ENCODE measurements at regions of chr5 and their contacts with region 1.

Region 1: DNA sequence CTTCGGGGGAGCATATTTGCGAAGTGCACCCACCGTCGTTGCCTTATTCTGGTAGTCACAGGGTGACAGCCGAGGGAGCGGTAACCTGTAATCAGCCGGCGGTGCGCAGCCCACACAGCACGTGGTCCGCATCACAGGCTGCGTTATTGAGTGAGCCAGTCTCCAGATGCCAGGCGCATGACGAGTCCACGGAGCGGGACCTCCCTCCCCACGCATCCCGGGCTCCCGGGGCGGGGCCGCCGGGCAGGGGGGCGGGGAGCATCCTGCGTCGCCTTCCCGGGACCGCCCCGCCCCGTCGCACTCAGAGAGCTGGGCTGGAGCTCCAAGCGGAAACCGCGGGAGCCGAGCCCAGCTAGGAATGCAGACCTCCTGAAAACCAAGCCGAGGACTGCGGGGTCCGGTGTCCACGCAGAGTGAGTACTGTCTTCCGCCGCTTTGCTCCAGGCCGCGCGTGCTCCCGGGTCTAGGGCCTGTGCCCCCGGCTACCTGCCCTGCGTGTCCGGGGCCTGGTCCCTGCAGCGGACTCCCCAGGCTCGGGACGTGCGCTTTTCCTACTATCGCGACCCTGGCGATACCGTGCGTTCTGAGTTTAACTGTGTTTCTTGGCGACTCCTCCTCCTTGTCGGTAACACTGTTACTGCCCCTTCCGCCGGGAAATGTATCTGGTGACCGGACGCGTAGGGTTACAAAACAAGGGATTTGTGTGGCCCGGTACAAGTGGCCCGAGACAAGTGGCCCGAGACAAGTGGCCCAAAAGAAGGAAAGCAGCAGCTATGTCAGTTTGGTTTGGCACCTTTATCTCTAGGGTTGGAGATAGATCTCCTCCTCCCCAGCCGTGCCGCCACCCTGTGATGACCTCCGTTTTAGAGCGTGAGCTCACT is 40.6 kb downstream of the CAST start:
- DNase-seq: peak; percentile 83 to 97 (median 94)
- H3K4me3 ChIP-seq: peak overlapping the region; percentile 63 to 96 (median 84)
- H3K27ac ChIP-seq: peak overlapping the region; percentile 35 to 97 (median 86)
- H3K27me3 ChIP-seq: no peaks in the 10 kb centered on the region
- CTCF ChIP-seq: peak in 13 of 56 donors; percentile 4 to 40 (median 15)

Region 2: GRCh38 chr5:95134326-95134725 is 1568.4 kb before region 1 on chr5:
- intact Hi-C with region 1: no loop called
- DNase-seq: no peak
- H3K4me3 ChIP-seq: no peak overlapping the region
- H3K27ac ChIP-seq: no peak overlapping the region
- H3K27me3 ChIP-seq: no peaks in the 10 kb centered on the region
- CTCF ChIP-seq: no peak

Region 3: DNA sequence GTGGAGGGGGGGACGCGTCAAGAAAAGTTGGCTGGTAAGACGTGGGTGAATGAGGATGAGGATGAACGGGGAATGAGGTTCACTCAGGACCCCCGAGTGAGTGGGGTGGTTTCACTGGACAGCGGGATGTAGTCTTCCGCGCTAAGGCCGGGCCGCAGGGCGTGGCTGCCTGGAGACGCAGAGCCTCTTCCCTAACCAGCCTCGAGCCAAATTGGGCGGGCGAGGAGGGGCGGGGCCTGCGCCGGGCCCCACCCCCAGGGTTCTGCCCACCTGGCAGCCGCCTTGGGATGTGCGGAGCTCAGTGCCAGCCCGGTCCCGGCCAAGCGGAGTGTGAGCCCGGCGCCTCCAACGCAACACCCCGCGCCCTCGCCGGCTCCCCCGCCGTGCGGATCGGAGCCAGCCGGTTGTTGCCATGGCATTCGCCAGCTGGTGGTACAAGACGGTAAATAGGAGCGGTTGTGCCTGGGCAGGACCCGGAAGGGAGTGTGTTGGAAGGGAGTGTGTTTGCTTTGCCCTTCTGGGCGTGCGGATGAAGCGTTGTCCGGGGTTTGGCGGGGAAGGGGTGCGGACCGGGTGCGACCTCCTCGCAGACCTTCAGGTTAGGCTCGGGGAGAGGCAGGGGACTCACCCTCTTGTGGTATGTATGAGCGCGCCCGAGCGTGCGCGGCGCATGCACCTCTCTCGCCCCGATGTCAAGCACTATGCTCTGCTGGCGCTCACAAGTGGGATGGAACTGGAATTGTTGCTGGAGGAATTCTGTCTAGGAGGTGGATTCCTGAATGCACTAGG is 39.8 kb before region 1 on chr5:
- intact Hi-C with region 1: loop called (anchors 2 kb)
- DNase-seq: peak; percentile 81 to 95 (median 90)
- H3K4me3 ChIP-seq: peak overlapping the region; percentile 65 to 98 (median 88)
- H3K27ac ChIP-seq: peak overlapping the region; percentile 54 to 95 (median 89)
- H3K27me3 ChIP-seq: no peaks in the 10 kb centered on the region
- CTCF ChIP-seq: peak in 8 of 56 donors; percentile 6 to 29 (median 16)

Measured in dorsolateral prefrontal cortex (tissue), 120 donors.